Prostate gland (tissue), 2 donors: ENCODE measurements at regions of chr2 and their contacts with region 1.

Region 1: GRCh38 chr2:25521665-25522387 is 151.6 kb downstream of the DTNB start:
- DNase-seq: peak; percentile 23
- H3K4me3 ChIP-seq: no peak overlapping the region
- H3K27ac ChIP-seq: no peak overlapping the region
- H3K4me1 ChIP-seq: no peaks in the 10 kb centered on the region
- H3K27me3 ChIP-seq: no peaks in the 10 kb centered on the region
- CTCF ChIP-seq: peak; percentile 19 to 90 (median 70)
- POLR2A ChIP-seq: no peak

Region 2: DNA sequence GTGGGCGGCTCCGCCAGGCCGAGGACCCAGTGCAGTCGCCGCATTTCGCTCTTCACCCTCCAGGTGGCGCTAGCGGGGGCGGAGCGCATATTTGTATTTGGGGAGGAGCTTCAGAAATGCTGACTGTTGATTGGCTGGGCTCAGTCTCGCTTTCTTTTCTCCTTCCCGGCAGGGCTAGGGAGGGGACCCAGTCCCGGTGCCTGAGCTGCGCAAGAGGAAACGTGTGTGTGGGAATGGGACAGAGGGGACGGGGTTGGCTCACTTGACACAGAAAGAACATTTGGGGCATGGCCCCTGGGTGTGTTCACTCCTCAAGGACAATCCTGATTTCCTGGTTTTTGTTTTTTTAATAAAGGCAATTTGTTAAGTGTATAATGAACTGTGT is 159.8 kb before region 1 on chr2:
- intact Hi-C with region 1: loop called (anchors 5 kb)
- DNase-seq: peak; percentile 91
- H3K4me3 ChIP-seq: peak overlapping the region; percentile 24 to 26
- H3K27ac ChIP-seq: peak overlapping the region; percentile 4 to 49
- H3K4me1 ChIP-seq: no peaks in the 10 kb centered on the region
- H3K27me3 ChIP-seq: no peaks in the 10 kb centered on the region
- CTCF ChIP-seq: peak; percentile 92 to 99 (median 97)
- POLR2A ChIP-seq: peak; percentile 84